ENCODE measurements at regions of chr20 and their contacts with region 1.

Region 1: GRCh38 chr20:62926239-62927104 is at the start of gene DIDO1:
- DNase-seq: peak; percentile 84 to 88 (median 87)
- H3K4me3 ChIP-seq: peak within 1 kb of the TSS; percentile 74 to 97 (median 93)
- H3K27ac ChIP-seq: peak within 1 kb of the TSS; percentile 91 to 95
- H3K4me1 ChIP-seq: peaks cover 20 to 78% (median 60%) of the 10 kb centered on the region in 4 experiments
- H3K27me3 ChIP-seq: no peaks in the 10 kb centered on the region

Region 2: GRCh38 chr20:62339647-62340070 is 586.8 kb before region 1 on chr20:
- CTCF ChIA-PET with region 1: no interaction called
- POLR2A ChIA-PET with region 1: no interaction called
- DNase-seq: peak in 1 of 3 donors; percentile 15
- H3K4me3 ChIP-seq: no peak overlapping the region
- H3K27ac ChIP-seq: no peak overlapping the region
- H3K4me1 ChIP-seq: no peaks in the 10 kb centered on the region
- H3K27me3 ChIP-seq: peaks cover 0 to 2% (median 0%) of the 10 kb centered on the region in 5 experiments

Region 3: DNA sequence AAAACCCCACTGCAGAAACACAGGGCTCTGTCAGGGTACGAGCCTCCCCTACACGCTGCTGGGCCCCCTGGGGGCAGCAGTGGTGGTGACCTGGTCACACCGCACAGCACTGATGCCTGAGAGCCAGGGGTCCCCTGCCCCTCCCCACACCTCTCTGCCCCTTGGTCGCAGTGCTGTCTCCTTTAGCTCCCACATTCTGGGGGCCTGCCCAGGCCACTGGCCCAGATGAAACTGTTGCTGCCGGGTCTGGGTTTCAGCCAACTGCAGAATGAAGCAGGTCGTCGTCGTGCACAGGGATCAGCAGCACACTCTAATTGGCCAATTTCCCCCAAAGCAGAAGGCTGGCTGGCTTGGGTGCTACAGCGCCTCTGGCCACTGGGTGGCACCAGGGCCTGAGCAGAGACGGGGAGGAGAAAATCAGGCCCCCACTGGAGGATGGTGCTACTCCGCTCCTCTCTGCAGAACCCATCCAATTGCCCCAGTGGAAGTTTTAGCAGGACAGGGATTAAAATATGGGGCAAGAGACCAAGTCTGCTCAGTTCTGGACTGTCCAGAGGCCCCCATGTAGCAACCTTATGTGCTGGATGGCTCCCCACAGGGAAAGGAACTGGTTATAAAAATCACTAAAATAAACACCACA is 26.3 kb before region 1 on chr20:
- CTCF ChIA-PET with region 1: interaction called, 155 read pairs
- POLR2A ChIA-PET with region 1: no interaction called
- DNase-seq: peak; percentile 77 to 91 (median 89)
- H3K4me3 ChIP-seq: peak overlapping the region in 1 of 7 experiments; percentile 45
- H3K27ac ChIP-seq: no peak overlapping the region
- H3K4me1 ChIP-seq: peaks cover 0 to 15% (median 8%) of the 10 kb centered on the region in 4 experiments
- H3K27me3 ChIP-seq: no peaks in the 10 kb centered on the region

Region 4: DNA sequence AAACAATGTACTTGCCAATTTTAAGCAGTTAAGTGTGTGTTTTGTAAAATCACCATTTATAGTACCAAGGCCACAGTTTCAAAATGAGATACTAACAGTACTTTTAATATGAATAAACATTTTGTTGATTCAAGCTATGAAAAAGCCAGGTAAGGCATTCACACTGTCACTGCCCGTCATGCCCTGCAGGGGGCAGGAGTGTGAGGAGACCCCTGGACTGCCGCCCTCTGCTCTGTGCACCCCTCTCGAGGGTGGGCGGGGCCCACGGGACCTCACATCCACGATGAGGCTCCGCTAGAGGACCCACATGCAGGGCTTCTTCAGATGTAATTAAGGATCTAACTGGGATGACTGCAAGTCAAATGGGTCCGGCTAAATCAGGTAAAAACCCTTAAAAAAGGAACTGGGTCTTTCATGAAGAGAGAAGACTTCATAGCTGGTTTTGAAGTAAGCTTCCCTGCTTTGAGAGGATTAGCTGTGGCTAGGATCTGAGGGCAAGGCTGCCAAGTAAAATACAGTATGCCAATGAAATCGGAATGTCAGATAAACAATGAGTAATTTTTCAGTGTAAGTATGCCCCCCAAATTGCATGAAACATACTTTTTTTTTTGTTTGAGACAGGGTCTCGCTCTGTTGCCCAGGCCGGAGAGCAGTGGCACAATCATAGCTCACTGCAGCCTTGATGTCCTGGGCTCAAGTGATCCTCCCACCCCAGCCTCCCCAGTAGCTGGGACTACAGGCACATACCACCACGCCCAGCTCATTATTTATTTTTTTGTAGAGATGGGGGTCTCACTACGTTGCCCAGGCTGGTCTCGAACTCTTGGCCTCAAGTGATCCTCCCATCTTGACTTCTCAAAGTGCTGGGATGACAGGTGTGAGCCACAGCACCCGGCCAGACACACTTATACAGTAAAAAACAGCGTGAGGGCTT is 18.8 kb before region 1 on chr20:
- CTCF ChIA-PET with region 1: interaction called, 155 read pairs
- POLR2A ChIA-PET with region 1: no interaction called
- DNase-seq: peak; percentile 59 to 71 (median 70)
- H3K4me3 ChIP-seq: no peak overlapping the region
- H3K27ac ChIP-seq: no peak overlapping the region
- H3K4me1 ChIP-seq: no peaks in the 10 kb centered on the region
- H3K27me3 ChIP-seq: no peaks in the 10 kb centered on the region

Region 5: GRCh38 chr20:62914970-62915457 is 11.5 kb before region 1 on chr20:
- CTCF ChIA-PET with region 1: interaction called, 89 read pairs
- POLR2A ChIA-PET with region 1: interaction called, 6 read pairs
- DNase-seq: peak; percentile 79 to 90 (median 89)
- H3K4me3 ChIP-seq: peak overlapping the region in 4 of 7 experiments; percentile 5 to 58 (median 32)
- H3K27ac ChIP-seq: peak overlapping the region; percentile 78 to 89
- H3K4me1 ChIP-seq: peaks cover 22 to 65% (median 45%) of the 10 kb centered on the region in 4 experiments
- H3K27me3 ChIP-seq: no peaks in the 10 kb centered on the region

Region 6: DNA sequence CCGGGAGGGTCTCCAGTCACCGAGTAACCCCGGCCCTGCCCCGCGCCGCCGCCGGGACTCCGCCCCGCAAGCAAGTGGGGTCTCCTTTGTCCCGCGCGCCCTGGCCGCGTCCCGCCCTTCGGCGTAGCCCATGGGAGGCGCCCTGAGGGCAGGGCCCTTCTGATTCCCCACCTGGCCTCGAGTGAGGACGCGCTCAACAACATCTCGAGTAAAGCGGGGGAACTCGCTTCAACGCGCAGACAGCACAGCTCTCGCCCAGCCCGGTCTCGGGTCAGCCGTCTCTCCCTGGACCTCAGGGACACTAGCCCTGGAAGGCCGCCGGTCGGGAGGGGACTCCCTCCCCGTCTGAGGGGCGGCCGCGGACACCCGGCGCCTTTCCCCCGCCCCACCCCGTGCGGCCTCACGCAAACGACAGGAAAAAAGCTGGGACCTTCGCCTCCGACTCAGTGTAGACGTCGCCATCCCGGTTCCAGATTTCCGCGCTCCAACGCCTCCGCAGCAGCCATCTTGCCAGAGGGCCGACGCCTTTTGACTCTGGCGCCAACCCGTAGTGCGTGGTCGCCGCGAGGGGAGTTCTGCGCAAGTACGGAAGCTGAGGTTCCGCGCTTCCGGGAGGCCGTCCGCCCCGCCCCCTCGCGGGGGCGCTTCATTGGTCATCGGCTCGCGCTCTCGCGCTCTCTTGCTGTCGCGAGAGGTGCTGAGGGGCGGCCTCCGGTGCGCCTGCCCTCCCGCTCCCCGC is 11.1 kb after region 1 on chr20:
- CTCF ChIA-PET with region 1: interaction called, 11 read pairs
- POLR2A ChIA-PET with region 1: interaction called, 9 read pairs
- DNase-seq: peak; percentile 96 to 98 (median 98)
- H3K4me3 ChIP-seq: peak overlapping the region; percentile 83 to 98 (median 91)
- H3K27ac ChIP-seq: peak overlapping the region; percentile 75 to 89
- H3K4me1 ChIP-seq: peaks cover 5 to 48% (median 25%) of the 10 kb centered on the region in 4 experiments
- H3K27me3 ChIP-seq: no peaks in the 10 kb centered on the region

Measured in common myeloid progenitor, CD34-positive (primary cell).